ENCODE measurements at regions of chr2 and their contacts with region 1.

Region 1: GRCh38 chr2:223101340-223102039 is 49.5 kb downstream of the KCNE4 start:
- DNase-seq: no peak
- ATAC-seq: peak in 3 of 4 donors; percentile 52 to 69 (median 61)
- H3K4me3 ChIP-seq: no peak overlapping the region
- H3K27ac ChIP-seq: peak overlapping the region in 6 of 12 donors; percentile 2 to 57 (median 23)
- H3K4me1 ChIP-seq: peaks cover 0 to 24% (median 6%) of the 10 kb centered on the region in 12 donors
- H3K27me3 ChIP-seq: no peaks in the 10 kb centered on the region
- CTCF ChIP-seq: peak in 11 of 12 donors; percentile 10 to 48 (median 34)
- POLR2A ChIP-seq: no peak

Region 2: GRCh38 chr2:222982010-222982908 is 119.2 kb before region 1 on chr2:
- intact Hi-C with region 1: loop called in 5 of 10 experiments (anchors 2 to 5 kb)
- DNase-seq: peak in 4 of 5 donors; percentile 33 to 61 (median 42)
- ATAC-seq: peak; percentile 78 to 95 (median 92)
- H3K4me3 ChIP-seq: no peak overlapping the region
- H3K27ac ChIP-seq: no peak overlapping the region
- H3K4me1 ChIP-seq: peaks cover 0 to 8% (median 0%) of the 10 kb centered on the region in 12 donors
- H3K27me3 ChIP-seq: no peaks in the 10 kb centered on the region
- CTCF ChIP-seq: peak in 11 of 12 donors; percentile 19 to 70 (median 58)
- POLR2A ChIP-seq: no peak

Region 3: DNA sequence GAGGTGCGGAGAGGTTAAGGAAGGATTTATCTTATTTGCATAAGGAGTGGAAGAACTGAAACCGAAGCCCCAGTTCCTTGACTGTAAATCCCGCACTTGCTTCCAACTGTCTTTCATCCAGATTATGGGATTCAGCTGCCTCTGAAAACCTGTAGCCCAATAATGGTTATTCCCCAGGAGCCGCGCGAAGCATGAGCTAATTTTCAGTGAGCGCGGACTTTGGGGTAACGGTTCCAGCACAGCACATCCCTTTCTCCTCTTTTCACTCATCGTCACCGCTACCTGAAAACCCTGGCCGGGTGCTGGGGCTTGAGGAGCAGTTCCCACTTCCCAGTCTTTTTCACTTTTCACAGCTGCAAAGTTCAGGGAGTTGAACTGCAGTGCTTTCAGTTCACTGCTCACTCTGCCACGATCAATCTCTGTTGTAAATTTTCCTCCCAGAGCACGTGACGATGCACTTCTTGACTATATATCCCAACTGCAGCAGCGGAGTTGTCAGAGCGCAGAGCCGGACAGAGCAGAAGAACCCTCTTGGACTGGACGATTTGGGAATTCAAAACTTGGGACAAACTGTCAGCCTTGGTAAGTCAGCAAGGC is 49.7 kb before region 1 on chr2 and contains the start of gene KCNE4:
- intact Hi-C with region 1: loop called in 2 of 10 experiments (anchors 5 kb)
- DNase-seq: peak in 2 of 5 donors; percentile 37 to 39
- ATAC-seq: peak in 2 of 4 donors; percentile 19 to 32
- H3K4me3 ChIP-seq: peak within 1 kb of the TSS; percentile 5 to 66 (median 52)
- H3K27ac ChIP-seq: peak within 1 kb of the TSS; percentile 62 to 86 (median 75)
- H3K4me1 ChIP-seq: peaks cover 0 to 48% (median 18%) of the 10 kb centered on the region in 12 donors
- H3K27me3 ChIP-seq: no peaks in the 10 kb centered on the region
- CTCF ChIP-seq: no peak
- POLR2A ChIP-seq: peak in 1 of 2 donors; percentile 51
- total RNA-seq, gene KCNE4: 0.69 to 3.7 (median 1.6) TPM